ENCODE measurements at regions of chr17 and their contacts with region 1.

Region 1: GRCh38 chr17:1958134-1958881 is 66.8 kb downstream of the RTN4RL1 start:
- DNase-seq: no peak
- ATAC-seq: peak; percentile 70
- H3K4me3 ChIP-seq: no peak overlapping the region
- H3K27ac ChIP-seq: no peak overlapping the region
- H3K4me1 ChIP-seq: peaks cover 28% of the 10 kb centered on the region
- H3K27me3 ChIP-seq: peaks cover 6 to 27% of the 10 kb centered on the region in 2 experiments; a peak in 4 of 5 replicates
- CTCF ChIP-seq: no peak
- EP300 ChIP-seq: no peak
- POLR2A ChIP-seq: no peak
- RAD21 ChIP-seq: no peak

Region 2: DNA sequence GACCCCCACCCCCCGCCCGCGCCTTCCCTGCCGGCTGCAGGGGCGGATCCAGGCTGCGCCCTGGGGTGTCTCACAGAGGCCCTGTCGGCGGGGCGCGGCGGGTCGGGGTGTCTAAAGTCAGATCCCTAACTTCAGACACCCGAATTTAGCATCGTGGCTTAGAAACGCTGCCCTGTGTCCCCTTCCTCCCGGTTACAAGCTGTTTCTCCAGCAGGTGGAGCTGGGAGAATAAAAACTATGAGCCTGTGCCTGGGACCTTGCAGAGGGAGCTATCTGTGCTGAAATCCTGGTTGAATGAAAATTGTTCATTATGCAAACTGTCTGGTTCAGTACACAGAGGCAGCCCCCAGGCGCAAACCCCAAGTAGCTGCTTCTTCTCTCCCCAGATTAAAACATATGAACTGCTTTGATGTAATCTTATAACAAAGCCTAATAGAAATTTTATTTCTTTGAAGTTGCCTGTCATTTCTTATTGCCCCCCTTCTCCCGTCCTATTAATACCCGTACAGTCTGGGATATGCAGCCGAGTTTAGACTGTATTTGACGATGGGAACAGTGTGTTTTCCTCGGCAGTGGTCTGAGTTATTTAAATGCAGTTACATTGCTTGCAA is 49.5 kb before region 1 on chr17:
- CTCF ChIA-PET with region 1: no interaction called
- POLR2A ChIA-PET with region 1: no interaction called
- in situ Hi-C with region 1: no loop called
- intact Hi-C with region 1: loop called (anchors 5 kb)
- DNase-seq: peak; percentile 72
- ATAC-seq: peak; percentile 79
- H3K4me3 ChIP-seq: no peak overlapping the region
- H3K27ac ChIP-seq: no peak overlapping the region
- H3K4me1 ChIP-seq: peaks cover 42% of the 10 kb centered on the region
- H3K27me3 ChIP-seq: peaks cover 1 to 47% of the 10 kb centered on the region in 2 experiments; a peak in 4 of 5 replicates
- CTCF ChIP-seq: peak; percentile 89
- EP300 ChIP-seq: no peak
- POLR2A ChIP-seq: no peak
- RAD21 ChIP-seq: peak; percentile 83

Region 3: GRCh38 chr17:2029911-2030778 is 71.8 kb after region 1 on chr17 and contains the start of gene DPH1:
- CTCF ChIA-PET with region 1: no interaction called
- POLR2A ChIA-PET with region 1: no interaction called
- in situ Hi-C with region 1: no loop called
- intact Hi-C with region 1: no loop called
- DNase-seq: peak; percentile 92
- ATAC-seq: peak; percentile 94
- H3K4me3 ChIP-seq: peak within 1 kb of the TSS; percentile 89 to 98 (median 96)
- H3K27ac ChIP-seq: peak within 1 kb of the TSS; percentile 52
- H3K4me1 ChIP-seq: peaks cover 32% of the 10 kb centered on the region
- H3K27me3 ChIP-seq: peaks cover 0 to 24% of the 10 kb centered on the region in 2 experiments; a peak in 2 of 5 replicates
- CTCF ChIP-seq: peak; percentile 35
- EP300 ChIP-seq: 0 out of 4 replicates have a peak, but pooled peaks of 1 of the 2 experiments have one; percentile 23
- POLR2A ChIP-seq: peak; percentile 68 to 73
- RAD21 ChIP-seq: 0 out of 2 replicates have a peak, but pooled peaks have one; percentile 22
- total RNA-seq, gene DPH1: 14.5 and 25.3 TPM in 2 replicates

Region 4: GRCh38 chr17:2157675-2158395 is 199.5 kb after region 1 on chr17:
- CTCF ChIA-PET with region 1: no interaction called
- POLR2A ChIA-PET with region 1: no interaction called
- in situ Hi-C with region 1: no loop called
- intact Hi-C with region 1: no loop called
- DNase-seq: peak; percentile 70
- ATAC-seq: peak; percentile 66
- H3K4me3 ChIP-seq: no peak overlapping the region
- H3K27ac ChIP-seq: peak overlapping the region; percentile 15
- H3K4me1 ChIP-seq: peaks cover 18% of the 10 kb centered on the region
- H3K27me3 ChIP-seq: no peaks in the 10 kb centered on the region
- CTCF ChIP-seq: no peak
- EP300 ChIP-seq: peak; percentile 48 to 64; a peak in 1 of 4 replicates
- POLR2A ChIP-seq: no peak
- RAD21 ChIP-seq: no peak

Measured in HepG2 (cell line).